B cell (primary cell): ENCODE measurements at regions of chr6 and their contacts with region 1.

Region 1: GRCh38 chr6:139364302-139364981 is 10.0 kb downstream of the CITED2 start:
- DNase-seq: peak; percentile 74
- ATAC-seq: peak; percentile 36
- H3K4me3 ChIP-seq: no peak overlapping the region
- H3K4me3 Mint-ChIP-seq: no peak overlapping the region
- H3K27ac ChIP-seq: no peak overlapping the region
- H3K27ac Mint-ChIP-seq: peak overlapping the region; percentile 54
- H3K4me1 ChIP-seq: peaks cover 8 to 11% of the 10 kb centered on the region in 2 donors
- H3K4me1 Mint-ChIP-seq: peaks cover 28% of the 10 kb centered on the region
- H3K27me3 ChIP-seq: no peaks in the 10 kb centered on the region
- H3K27me3 Mint-ChIP-seq: no peaks in the 10 kb centered on the region
- CTCF ChIP-seq: peak; percentile 93

Region 2: DNA sequence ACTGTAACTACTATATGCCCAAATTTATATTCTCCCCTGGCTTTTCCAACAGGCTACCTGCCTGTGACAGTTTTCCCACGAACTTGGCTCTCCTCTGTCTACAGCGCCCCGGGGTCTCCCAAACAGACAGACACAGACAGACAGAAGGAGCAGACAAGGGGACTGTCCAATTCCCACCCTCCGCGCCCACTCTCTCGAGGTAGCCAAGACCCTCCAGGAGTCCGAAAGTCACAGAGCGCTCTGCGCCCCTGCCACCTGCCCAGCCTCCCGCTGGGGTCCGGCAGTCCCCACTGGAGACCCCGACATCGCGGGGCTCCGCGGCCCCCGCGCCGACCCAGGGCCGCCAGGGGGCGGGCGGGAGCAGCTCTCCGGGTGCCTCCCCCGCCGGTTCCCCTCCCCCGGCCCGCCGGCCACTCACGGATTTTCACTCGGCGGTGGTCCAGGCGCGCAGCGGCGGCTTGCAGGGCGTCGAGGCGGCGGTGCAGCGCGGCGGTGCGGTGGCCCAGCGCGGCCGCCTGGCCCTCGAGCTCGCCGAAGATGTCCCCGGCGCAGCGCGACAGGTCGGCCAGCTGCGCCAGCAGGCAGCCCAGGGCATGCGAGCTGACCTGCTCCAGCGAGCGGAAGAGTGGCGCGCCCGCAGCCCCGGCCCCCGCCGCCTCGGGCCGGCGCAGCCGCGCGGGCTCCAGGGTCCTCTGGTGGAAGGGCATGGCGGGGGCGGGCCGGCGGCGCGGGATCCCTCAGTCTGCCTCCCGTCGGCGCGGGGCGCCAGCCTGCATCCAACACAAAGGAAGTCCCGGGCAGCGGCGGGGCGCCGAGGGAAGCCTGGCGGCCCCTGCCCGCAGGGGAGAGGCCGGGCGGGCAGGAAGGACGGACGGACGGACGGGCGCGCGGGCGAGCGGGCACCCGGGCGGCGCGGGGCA is 672.1 kb before region 1 on chr6:
- CTCF ChIA-PET with region 1: interaction called, 4 read pairs
- POLR2A ChIA-PET with region 1: no interaction called
- intact Hi-C with region 1: loop called (anchors 2 kb)
- DNase-seq: peak; percentile 76
- ATAC-seq: peak; percentile 76
- H3K4me3 ChIP-seq: peak overlapping the region in 4 of 5 experiments; percentile 7 to 76 (median 64)
- H3K4me3 Mint-ChIP-seq: peak overlapping the region; percentile 86
- H3K27ac ChIP-seq: no peak overlapping the region
- H3K27ac Mint-ChIP-seq: no peak overlapping the region
- H3K4me1 ChIP-seq: peaks cover 9 to 11% of the 10 kb centered on the region in 2 donors
- H3K4me1 Mint-ChIP-seq: peaks cover 10% of the 10 kb centered on the region
- H3K27me3 ChIP-seq: peaks cover 0 to 28% (median 12%) of the 10 kb centered on the region in 4 experiments
- H3K27me3 Mint-ChIP-seq: peaks cover 31% of the 10 kb centered on the region
- CTCF ChIP-seq: peak; percentile 84

Region 3: DNA sequence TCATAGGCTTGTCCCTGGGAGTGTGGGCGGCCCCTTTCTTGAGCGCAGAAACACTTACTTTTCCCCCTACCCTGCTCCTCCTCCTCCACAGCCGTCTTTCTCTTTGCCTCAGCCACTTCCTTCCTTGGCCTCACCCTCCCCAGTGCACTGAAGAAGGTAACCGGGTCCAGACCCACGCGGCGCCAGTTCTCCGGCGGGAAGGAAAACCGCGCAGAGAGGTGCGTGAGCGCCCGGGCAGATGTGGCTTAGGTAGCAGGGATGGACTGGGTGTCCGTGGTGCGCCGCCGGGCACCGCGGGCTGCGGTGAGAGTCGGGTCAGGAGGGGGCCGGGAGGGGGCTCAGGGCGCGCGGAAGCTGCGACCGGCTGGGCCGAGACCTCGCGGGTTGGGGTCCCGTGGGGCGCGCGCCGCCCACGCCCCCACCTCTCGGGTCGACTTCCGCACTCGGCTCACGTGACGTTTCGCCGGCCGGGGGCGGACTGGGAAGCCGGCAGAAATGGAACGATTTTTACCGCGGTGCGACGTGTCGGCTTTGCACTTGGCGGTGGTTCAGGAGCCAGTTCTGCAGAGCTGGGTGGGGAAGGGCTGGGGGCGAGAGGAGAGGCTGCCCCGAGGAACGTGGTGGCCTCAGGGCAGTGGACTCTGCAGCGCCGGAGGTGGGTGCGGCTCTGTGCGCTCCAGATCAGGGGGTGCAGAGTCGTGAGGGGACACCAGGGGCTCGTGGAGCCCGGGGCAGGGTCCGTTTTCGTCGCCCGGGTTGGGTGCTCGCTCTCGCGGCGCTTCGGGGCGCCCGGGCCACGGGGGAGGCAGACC is 335.6 kb before region 1 on chr6 and contains the start of gene ABRACL:
- CTCF ChIA-PET with region 1: interaction called, 7 read pairs
- POLR2A ChIA-PET with region 1: no interaction called
- intact Hi-C with region 1: loop called (anchors 2 kb)
- DNase-seq: peak; percentile 87
- ATAC-seq: peak; percentile 72
- H3K4me3 ChIP-seq: peak within 1 kb of the TSS; percentile 84 to 100 (median 89)
- H3K4me3 Mint-ChIP-seq: no peak within 1 kb of the TSS
- H3K27ac ChIP-seq: peak within 1 kb of the TSS; percentile 87 to 92
- H3K27ac Mint-ChIP-seq: peak within 1 kb of the TSS; percentile 94
- H3K4me1 ChIP-seq: peaks cover 27 to 28% of the 10 kb centered on the region in 2 donors
- H3K4me1 Mint-ChIP-seq: peaks cover 20% of the 10 kb centered on the region
- H3K27me3 ChIP-seq: no peaks in the 10 kb centered on the region
- H3K27me3 Mint-ChIP-seq: no peaks in the 10 kb centered on the region
- CTCF ChIP-seq: no peak
- total RNA-seq, gene ABRACL: 22.6 and 23.0 TPM in 2 replicates

Region 4: GRCh38 chr6:139230391-139230840 is 134.0 kb before region 1 on chr6:
- CTCF ChIA-PET with region 1: interaction called, 33 read pairs
- POLR2A ChIA-PET with region 1: interaction called, 3 read pairs
- intact Hi-C with region 1: no loop called
- DNase-seq: no peak
- ATAC-seq: no peak
- H3K4me3 ChIP-seq: no peak overlapping the region
- H3K4me3 Mint-ChIP-seq: no peak overlapping the region
- H3K27ac ChIP-seq: no peak overlapping the region
- H3K27ac Mint-ChIP-seq: no peak overlapping the region
- H3K4me1 ChIP-seq: no peaks in the 10 kb centered on the region
- H3K4me1 Mint-ChIP-seq: peaks cover 4% of the 10 kb centered on the region
- H3K27me3 ChIP-seq: no peaks in the 10 kb centered on the region
- H3K27me3 Mint-ChIP-seq: no peaks in the 10 kb centered on the region
- CTCF ChIP-seq: no peak

Region 5: DNA sequence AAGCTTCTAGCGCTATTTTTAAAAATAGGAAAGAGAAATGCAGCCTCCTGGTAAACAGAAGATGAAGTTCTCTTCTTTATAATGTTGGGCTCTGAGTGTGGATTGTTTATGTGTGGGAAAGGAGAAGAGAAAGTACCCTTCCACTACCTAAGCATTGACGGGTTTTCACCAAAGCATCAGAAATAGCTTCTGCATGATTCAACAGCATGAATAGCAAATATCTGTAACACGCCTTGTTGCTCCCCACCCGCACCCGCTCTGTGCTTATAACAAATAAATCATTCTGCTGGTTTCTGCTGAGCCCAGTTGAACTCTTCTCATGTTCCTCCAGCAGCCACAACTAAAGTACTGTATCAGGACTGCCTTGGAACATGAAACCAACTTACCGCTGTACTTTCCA is 93.4 kb before region 1 on chr6:
- CTCF ChIA-PET with region 1: interaction called, 17 read pairs
- POLR2A ChIA-PET with region 1: no interaction called
- intact Hi-C with region 1: loop called (anchors 5 kb)
- DNase-seq: peak; percentile 77
- ATAC-seq: peak; percentile 96
- H3K4me3 ChIP-seq: peak overlapping the region in 4 of 5 experiments; percentile 12 to 69 (median 44)
- H3K4me3 Mint-ChIP-seq: peak overlapping the region; percentile 83
- H3K27ac ChIP-seq: peak overlapping the region; percentile 75 to 91
- H3K27ac Mint-ChIP-seq: peak overlapping the region; percentile 93
- H3K4me1 ChIP-seq: peaks cover 50 to 54% of the 10 kb centered on the region in 2 donors
- H3K4me1 Mint-ChIP-seq: peaks cover 69% of the 10 kb centered on the region
- H3K27me3 ChIP-seq: no peaks in the 10 kb centered on the region
- H3K27me3 Mint-ChIP-seq: no peaks in the 10 kb centered on the region
- CTCF ChIP-seq: no peak

Region 6: GRCh38 chr6:139375232-139376016 is 11.0 kb after region 1 on chr6:
- CTCF ChIA-PET with region 1: interaction called, 38 read pairs
- POLR2A ChIA-PET with region 1: interaction called, 7 read pairs
- intact Hi-C with region 1: no loop called
- DNase-seq: peak; percentile 91
- ATAC-seq: peak; percentile 53
- H3K4me3 ChIP-seq: peak overlapping the region; percentile 91 to 99 (median 97)
- H3K4me3 Mint-ChIP-seq: peak overlapping the region; percentile 100
- H3K27ac ChIP-seq: peak overlapping the region; percentile 73 to 81
- H3K27ac Mint-ChIP-seq: peak overlapping the region; percentile 100
- H3K4me1 ChIP-seq: peaks cover 9 to 17% of the 10 kb centered on the region in 2 donors
- H3K4me1 Mint-ChIP-seq: peaks cover 23% of the 10 kb centered on the region
- H3K27me3 ChIP-seq: no peaks in the 10 kb centered on the region
- H3K27me3 Mint-ChIP-seq: no peaks in the 10 kb centered on the region
- CTCF ChIP-seq: no peak

Region 7: GRCh38 chr6:139888681-139889122 is 524.3 kb after region 1 on chr6:
- CTCF ChIA-PET with region 1: no interaction called
- POLR2A ChIA-PET with region 1: no interaction called
- intact Hi-C with region 1: no loop called
- DNase-seq: no peak
- ATAC-seq: no peak
- H3K4me3 ChIP-seq: no peak overlapping the region
- H3K4me3 Mint-ChIP-seq: no peak overlapping the region
- H3K27ac ChIP-seq: no peak overlapping the region
- H3K27ac Mint-ChIP-seq: no peak overlapping the region
- H3K4me1 ChIP-seq: peaks cover 4 to 9% of the 10 kb centered on the region in 2 donors
- H3K4me1 Mint-ChIP-seq: peaks cover 9% of the 10 kb centered on the region
- H3K27me3 ChIP-seq: no peaks in the 10 kb centered on the region
- H3K27me3 Mint-ChIP-seq: peaks cover 10% of the 10 kb centered on the region
- CTCF ChIP-seq: no peak